ENCODE measurements at regions of chr3 and their contacts with region 1.

Region 1: DNA sequence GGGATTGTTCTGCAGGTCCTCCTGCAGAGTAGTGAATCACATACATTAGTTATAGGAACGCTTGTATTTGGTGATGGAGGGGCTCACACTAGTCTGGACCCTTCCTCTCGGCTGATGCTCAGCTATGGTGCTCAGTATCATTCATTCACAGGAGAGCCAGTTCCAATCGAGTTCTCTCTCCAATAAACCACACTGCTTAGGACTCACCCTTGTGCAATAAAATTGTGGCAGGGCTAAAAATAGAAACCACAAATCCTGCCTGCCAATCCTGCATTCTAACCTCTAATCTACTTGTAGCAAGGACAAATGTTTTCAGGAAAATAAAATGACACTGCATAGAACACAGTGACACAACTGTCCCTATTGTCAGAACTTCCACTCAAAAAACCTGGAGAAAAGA is 138.4 kb upstream of the TBL1XR1 start:
- DNase-seq: no peak
- H3K4me3 ChIP-seq: no peak overlapping the region
- H3K27ac ChIP-seq: peak overlapping the region in 1 of 2 donors; percentile 15
- H3K4me1 ChIP-seq: peaks cover 0 to 35% of the 10 kb centered on the region in 2 donors
- H3K27me3 ChIP-seq: no peaks in the 10 kb centered on the region
- CTCF ChIP-seq: no peak

Region 2: GRCh38 chr3:177294221-177294620 is 41.5 kb before region 1 on chr3:
- intact Hi-C with region 1: loop called (anchors 2 kb)
- DNase-seq: peak; percentile 29 to 89
- H3K4me3 ChIP-seq: no peak overlapping the region
- H3K27ac ChIP-seq: peak overlapping the region; percentile 80 to 84
- H3K4me1 ChIP-seq: peaks cover 3 to 11% of the 10 kb centered on the region in 2 donors
- H3K27me3 ChIP-seq: no peaks in the 10 kb centered on the region
- CTCF ChIP-seq: no peak

Region 3: GRCh38 chr3:177810162-177810623 is 474.5 kb after region 1 on chr3:
- intact Hi-C with region 1: loop called (anchors 5 kb)
- DNase-seq: no peak
- H3K4me3 ChIP-seq: no peak overlapping the region
- H3K27ac ChIP-seq: no peak overlapping the region
- H3K4me1 ChIP-seq: peaks cover 0 to 20% of the 10 kb centered on the region in 2 donors
- H3K27me3 ChIP-seq: no peaks in the 10 kb centered on the region
- CTCF ChIP-seq: no peak